Activated CD4-positive, alpha-beta T cell treated with anti-CD3 and anti-CD28 coated beads for 36 hours (primary cell): ENCODE measurements at regions of chr14 and their contacts with region 1.

Region 1: GRCh38 chr14:22505697-22506377 is 83.2 kb downstream of the DAD1 start:
- DNase-seq: peak; percentile 51
- ATAC-seq: peak; percentile 34
- H3K4me3 Mint-ChIP-seq: peak overlapping the region; percentile 84
- H3K27ac Mint-ChIP-seq: peak overlapping the region; percentile 98
- H3K4me1 Mint-ChIP-seq: peaks cover 33% of the 10 kb centered on the region
- H3K27me3 Mint-ChIP-seq: no peaks in the 10 kb centered on the region

Region 2: GRCh38 chr14:21734457-21735074 is 771.3 kb before region 1 on chr14:
- CTCF ChIA-PET with region 1: no interaction called
- POLR2A ChIA-PET with region 1: interaction called, 10 read pairs
- intact Hi-C with region 1: no loop called
- DNase-seq: peak; percentile 45
- ATAC-seq: peak; percentile 52
- H3K4me3 Mint-ChIP-seq: peak overlapping the region; percentile 63
- H3K27ac Mint-ChIP-seq: peak overlapping the region; percentile 1
- H3K4me1 Mint-ChIP-seq: peaks cover 10% of the 10 kb centered on the region
- H3K27me3 Mint-ChIP-seq: peaks cover 35% of the 10 kb centered on the region

Region 3: GRCh38 chr14:21917699-21918436 is 588.0 kb before region 1 on chr14:
- CTCF ChIA-PET with region 1: interaction called, 4 read pairs
- POLR2A ChIA-PET with region 1: no interaction called
- intact Hi-C with region 1: loop called in 1 of 2 experiments (anchors 5 kb)
- DNase-seq: peak; percentile 74
- ATAC-seq: peak; percentile 57
- H3K4me3 Mint-ChIP-seq: peak overlapping the region; percentile 65
- H3K27ac Mint-ChIP-seq: peak overlapping the region; percentile 69
- H3K4me1 Mint-ChIP-seq: peaks cover 57% of the 10 kb centered on the region
- H3K27me3 Mint-ChIP-seq: no peaks in the 10 kb centered on the region

Region 4: DNA sequence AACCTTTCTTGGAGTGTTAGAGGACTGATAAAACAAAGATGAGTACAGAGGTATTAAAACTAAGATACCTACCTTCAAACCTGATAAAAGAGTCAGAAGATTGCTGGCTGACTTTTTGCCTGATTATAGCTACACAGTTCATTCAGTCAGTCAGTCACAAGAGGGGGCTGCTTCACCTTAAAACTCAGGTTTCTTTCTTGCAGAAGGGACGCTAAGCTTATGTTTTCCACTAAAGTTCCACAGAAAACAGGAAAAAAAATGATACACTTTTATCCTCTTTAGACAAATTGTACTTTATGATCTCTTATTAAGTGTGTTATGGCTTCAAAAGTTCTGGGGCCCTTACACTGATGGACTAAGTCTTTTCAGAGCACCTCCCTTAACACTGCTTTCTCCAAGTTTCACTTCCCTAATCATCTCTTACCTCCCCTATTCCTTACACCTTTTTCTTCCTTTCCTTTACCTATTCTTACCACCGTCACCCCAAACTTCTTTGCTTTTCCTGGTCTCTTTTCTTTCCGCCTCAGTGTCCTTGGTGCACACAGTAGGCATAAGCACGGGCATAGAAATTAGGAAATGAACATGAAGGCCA is 383.5 kb before region 1 on chr14:
- CTCF ChIA-PET with region 1: no interaction called
- POLR2A ChIA-PET with region 1: no interaction called
- intact Hi-C with region 1: loop called (anchors 5 to 10 kb)
- DNase-seq: peak; percentile 33
- ATAC-seq: no peak
- H3K4me3 Mint-ChIP-seq: peak overlapping the region; percentile 77
- H3K27ac Mint-ChIP-seq: peak overlapping the region; percentile 92
- H3K4me1 Mint-ChIP-seq: peaks cover 13% of the 10 kb centered on the region
- H3K27me3 Mint-ChIP-seq: no peaks in the 10 kb centered on the region

Region 5: GRCh38 chr14:22491683-22492621 is 13.9 kb before region 1 on chr14:
- CTCF ChIA-PET with region 1: interaction called, 3 read pairs
- POLR2A ChIA-PET with region 1: interaction called, 20 read pairs
- intact Hi-C with region 1: loop called in 1 of 2 experiments (anchors 2 kb)
- DNase-seq: peak; percentile 65
- ATAC-seq: peak; percentile 37
- H3K4me3 Mint-ChIP-seq: peak overlapping the region; percentile 84
- H3K27ac Mint-ChIP-seq: peak overlapping the region; percentile 99
- H3K4me1 Mint-ChIP-seq: peaks cover 7% of the 10 kb centered on the region
- H3K27me3 Mint-ChIP-seq: no peaks in the 10 kb centered on the region

Region 6: GRCh38 chr14:22536853-22537338 is 31.1 kb after region 1 on chr14:
- CTCF ChIA-PET with region 1: interaction called, 5 read pairs
- POLR2A ChIA-PET with region 1: interaction called, 10 read pairs
- intact Hi-C with region 1: loop called in 1 of 2 experiments (anchors 1 kb)
- DNase-seq: peak; percentile 94
- ATAC-seq: peak; percentile 84
- H3K4me3 Mint-ChIP-seq: peak overlapping the region; percentile 84
- H3K27ac Mint-ChIP-seq: peak overlapping the region; percentile 99
- H3K4me1 Mint-ChIP-seq: peaks cover 95% of the 10 kb centered on the region
- H3K27me3 Mint-ChIP-seq: no peaks in the 10 kb centered on the region

Region 7: GRCh38 chr14:22794551-22794951 is 288.7 kb after region 1 on chr14:
- CTCF ChIA-PET with region 1: no interaction called
- POLR2A ChIA-PET with region 1: no interaction called
- intact Hi-C with region 1: no loop called
- DNase-seq: no peak
- ATAC-seq: no peak
- H3K4me3 Mint-ChIP-seq: no peak overlapping the region
- H3K27ac Mint-ChIP-seq: no peak overlapping the region
- H3K4me1 Mint-ChIP-seq: peaks cover 11% of the 10 kb centered on the region
- H3K27me3 Mint-ChIP-seq: peaks cover 19% of the 10 kb centered on the region

Region 8: GRCh38 chr14:22886500-22887259 is 380.8 kb after region 1 on chr14:
- CTCF ChIA-PET with region 1: no interaction called
- POLR2A ChIA-PET with region 1: interaction called, 10 read pairs
- intact Hi-C with region 1: no loop called
- DNase-seq: peak; percentile 85
- ATAC-seq: peak; percentile 63
- H3K4me3 Mint-ChIP-seq: peak overlapping the region; percentile 70
- H3K27ac Mint-ChIP-seq: peak overlapping the region; percentile 83
- H3K4me1 Mint-ChIP-seq: peaks cover 50% of the 10 kb centered on the region
- H3K27me3 Mint-ChIP-seq: peaks cover 2% of the 10 kb centered on the region

Region 9: DNA sequence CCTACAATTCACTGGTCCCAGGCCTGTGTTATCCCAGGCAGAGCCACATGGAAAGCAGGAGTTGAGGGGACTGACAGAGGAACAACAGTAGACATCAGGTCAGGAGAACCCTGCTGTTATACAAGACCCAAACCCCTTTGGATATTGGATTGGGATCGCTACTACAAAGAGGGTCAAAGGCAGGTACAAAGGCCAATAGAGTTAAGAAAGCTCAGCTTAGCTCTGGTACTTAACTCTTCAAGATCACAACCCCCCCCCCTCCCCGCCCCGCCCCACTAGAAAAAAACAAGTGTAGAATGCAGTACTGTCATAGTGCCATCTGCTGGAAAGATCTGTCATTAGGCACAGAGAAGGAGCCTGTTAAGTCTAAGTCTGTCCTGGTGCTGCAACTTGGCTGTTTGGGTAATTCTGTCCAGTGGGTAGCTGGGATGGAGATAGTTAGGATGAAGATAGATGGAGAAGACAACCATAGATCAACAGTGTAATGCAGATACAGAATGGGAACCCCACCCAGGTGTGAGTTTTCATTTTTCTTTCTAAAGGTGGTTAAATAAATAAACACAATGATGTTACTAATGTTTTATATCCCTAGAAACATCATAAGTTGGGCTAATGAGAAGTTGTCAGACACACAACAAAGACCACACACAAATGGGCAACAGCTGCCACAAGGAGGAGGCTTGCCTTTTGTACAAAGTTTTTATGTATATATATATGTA is 394.4 kb after region 1 on chr14:
- CTCF ChIA-PET with region 1: no interaction called
- POLR2A ChIA-PET with region 1: no interaction called
- intact Hi-C with region 1: no loop called
- DNase-seq: peak; percentile 57
- ATAC-seq: peak; percentile 69
- H3K4me3 Mint-ChIP-seq: no peak overlapping the region
- H3K27ac Mint-ChIP-seq: peak overlapping the region; percentile 0
- H3K4me1 Mint-ChIP-seq: peaks cover 16% of the 10 kb centered on the region
- H3K27me3 Mint-ChIP-seq: no peaks in the 10 kb centered on the region